ENCODE measurements at regions of chr3 and their contacts with region 1.

Region 1: DNA sequence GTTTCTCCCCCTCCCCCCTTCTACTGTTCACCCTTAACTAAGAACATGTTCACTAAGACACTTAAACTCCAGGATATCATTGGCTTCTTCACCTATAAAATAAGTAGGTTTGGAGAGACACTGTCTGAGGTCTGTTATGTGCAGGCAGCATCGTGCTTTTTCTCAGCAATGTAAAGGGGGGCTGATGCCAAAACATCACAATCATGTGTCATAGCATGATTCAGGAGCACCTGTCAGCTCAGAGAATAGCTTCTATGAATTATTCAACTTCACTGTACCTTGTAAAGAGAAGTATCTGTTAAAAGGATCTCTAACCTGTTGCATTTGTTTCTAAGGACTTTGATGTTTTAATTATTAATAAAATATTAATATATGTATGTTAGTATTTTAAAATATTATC is 211.4 kb upstream of the EPHA3 start:
- DNase-seq: no peak
- H3K4me3 ChIP-seq: no peak overlapping the region
- H3K27ac ChIP-seq: no peak overlapping the region
- H3K4me1 ChIP-seq: no peaks in the 10 kb centered on the region
- CTCF ChIP-seq: no peak

Region 2: GRCh38 chr3:88882121-88882520 is 13.9 kb before region 1 on chr3:
- CTCF ChIA-PET with region 1: no interaction called
- POLR2A ChIA-PET with region 1: no interaction called
- intact Hi-C with region 1: loop called (anchors 2 kb)
- DNase-seq: no peak
- H3K4me3 ChIP-seq: no peak overlapping the region
- H3K27ac ChIP-seq: no peak overlapping the region
- H3K4me1 ChIP-seq: no peaks in the 10 kb centered on the region
- CTCF ChIP-seq: no peak

Region 3: GRCh38 chr3:88947013-88947412 is 51.0 kb after region 1 on chr3:
- CTCF ChIA-PET with region 1: no interaction called
- POLR2A ChIA-PET with region 1: no interaction called
- intact Hi-C with region 1: no loop called
- DNase-seq: no peak
- H3K4me3 ChIP-seq: no peak overlapping the region
- H3K27ac ChIP-seq: no peak overlapping the region
- H3K4me1 ChIP-seq: no peaks in the 10 kb centered on the region
- CTCF ChIP-seq: no peak

Region 4: DNA sequence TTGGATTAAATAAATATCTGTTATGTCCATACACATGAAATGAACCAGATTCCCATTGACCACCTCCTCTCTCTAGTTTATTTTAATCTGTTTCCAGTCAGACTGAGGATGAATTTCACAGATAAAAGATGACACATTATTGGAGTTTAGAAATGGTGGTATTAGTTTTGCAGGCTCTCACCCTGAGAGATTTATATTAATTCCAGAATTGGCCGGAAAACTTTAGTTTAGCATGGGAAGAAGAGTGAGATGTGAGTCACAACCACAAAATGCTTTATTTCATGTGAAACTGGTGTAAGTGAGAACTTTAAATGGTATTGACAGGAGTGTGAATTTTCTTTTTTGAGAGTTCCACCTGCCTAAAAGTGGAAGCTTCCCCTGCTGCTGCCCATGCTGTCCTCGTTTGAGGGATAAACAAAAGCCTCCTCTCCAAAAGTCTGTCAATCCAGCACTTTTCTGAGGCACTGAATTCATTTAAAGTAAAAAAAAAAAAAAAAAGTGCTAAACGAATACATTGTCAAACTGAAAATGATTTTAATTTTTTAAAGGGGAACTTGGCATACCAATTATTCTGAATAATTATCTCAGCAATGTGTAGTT is 146.3 kb after region 1 on chr3:
- CTCF ChIA-PET with region 1: no interaction called
- POLR2A ChIA-PET with region 1: no interaction called
- intact Hi-C with region 1: no loop called
- DNase-seq: no peak
- H3K4me3 ChIP-seq: no peak overlapping the region
- H3K27ac ChIP-seq: no peak overlapping the region
- H3K4me1 ChIP-seq: no peaks in the 10 kb centered on the region
- CTCF ChIP-seq: no peak